T-cell (primary cell): ENCODE measurements at regions of chr14 and their contacts with region 1.

Region 1: DNA sequence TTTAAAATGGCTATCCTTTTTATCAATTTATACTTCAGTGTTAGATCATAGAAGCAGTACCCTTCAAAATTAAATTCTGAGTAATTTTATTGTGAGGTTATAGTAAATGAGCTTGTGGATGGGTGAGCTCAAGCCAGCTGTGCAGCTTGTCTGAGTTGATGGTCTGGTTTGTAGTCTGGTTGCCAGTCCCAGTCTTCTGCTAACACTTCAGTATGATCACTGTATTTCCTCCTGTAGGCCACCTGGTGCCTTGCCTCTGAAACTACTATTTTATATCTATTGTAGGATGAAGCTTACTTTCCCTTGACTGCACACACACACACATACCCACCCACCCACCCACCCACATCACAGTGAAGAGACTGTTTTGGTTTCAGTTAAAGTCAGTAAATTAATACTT is 496.4 kb downstream of the PCNX1 start:
- DNase-seq: peak in 22 of 35 experiments; percentile 5 to 53 (median 19)
- ATAC-seq: peak in 3 of 4 experiments; percentile 47 to 70 (median 59)
- H3K4me3 ChIP-seq: no peak overlapping the region
- H3K4me3 Mint-ChIP-seq: no peak overlapping the region
- H3K27ac ChIP-seq: no peak overlapping the region
- H3K27ac Mint-ChIP-seq: no peak overlapping the region
- H3K4me1 ChIP-seq: peaks cover 14 to 18% of the 10 kb centered on the region in 2 experiments
- H3K4me1 Mint-ChIP-seq: peaks cover 33 to 48% (median 36%) of the 10 kb centered on the region in 3 donors
- H3K27me3 ChIP-seq: no peaks in the 10 kb centered on the region
- H3K27me3 Mint-ChIP-seq: no peaks in the 10 kb centered on the region

Region 2: GRCh38 chr14:71300566-71301330 is 102.9 kb before region 1 on chr14:
- CTCF ChIA-PET with region 1: no interaction called
- POLR2A ChIA-PET with region 1: no interaction called
- DNase-seq: no peak
- ATAC-seq: no peak
- H3K4me3 ChIP-seq: no peak overlapping the region
- H3K4me3 Mint-ChIP-seq: no peak overlapping the region
- H3K27ac ChIP-seq: no peak overlapping the region
- H3K27ac Mint-ChIP-seq: no peak overlapping the region
- H3K4me1 ChIP-seq: no peaks in the 10 kb centered on the region
- H3K4me1 Mint-ChIP-seq: peaks cover 0 to 3% (median 0%) of the 10 kb centered on the region in 3 donors
- H3K27me3 ChIP-seq: no peaks in the 10 kb centered on the region
- H3K27me3 Mint-ChIP-seq: peaks cover 0 to 7% of the 10 kb centered on the region in 2 donors

Region 3: GRCh38 chr14:71320734-71321573 is 82.7 kb before region 1 on chr14:
- CTCF ChIA-PET with region 1: interaction called, 7 to 12 read pairs
- POLR2A ChIA-PET with region 1: interaction called, 3 to 8 read pairs
- DNase-seq: peak; percentile 7 to 79 (median 51)
- ATAC-seq: peak; percentile 25 to 56 (median 52)
- H3K4me3 ChIP-seq: peak overlapping the region; percentile 85 to 87
- H3K4me3 Mint-ChIP-seq: peak overlapping the region; percentile 89 to 93 (median 91)
- H3K27ac ChIP-seq: peak overlapping the region; percentile 95
- H3K27ac Mint-ChIP-seq: peak overlapping the region; percentile 89 to 96
- H3K4me1 ChIP-seq: peaks cover 21 to 32% of the 10 kb centered on the region in 2 experiments
- H3K4me1 Mint-ChIP-seq: peaks cover 50 to 55% (median 54%) of the 10 kb centered on the region in 3 donors
- H3K27me3 ChIP-seq: no peaks in the 10 kb centered on the region
- H3K27me3 Mint-ChIP-seq: no peaks in the 10 kb centered on the region

Region 4: DNA sequence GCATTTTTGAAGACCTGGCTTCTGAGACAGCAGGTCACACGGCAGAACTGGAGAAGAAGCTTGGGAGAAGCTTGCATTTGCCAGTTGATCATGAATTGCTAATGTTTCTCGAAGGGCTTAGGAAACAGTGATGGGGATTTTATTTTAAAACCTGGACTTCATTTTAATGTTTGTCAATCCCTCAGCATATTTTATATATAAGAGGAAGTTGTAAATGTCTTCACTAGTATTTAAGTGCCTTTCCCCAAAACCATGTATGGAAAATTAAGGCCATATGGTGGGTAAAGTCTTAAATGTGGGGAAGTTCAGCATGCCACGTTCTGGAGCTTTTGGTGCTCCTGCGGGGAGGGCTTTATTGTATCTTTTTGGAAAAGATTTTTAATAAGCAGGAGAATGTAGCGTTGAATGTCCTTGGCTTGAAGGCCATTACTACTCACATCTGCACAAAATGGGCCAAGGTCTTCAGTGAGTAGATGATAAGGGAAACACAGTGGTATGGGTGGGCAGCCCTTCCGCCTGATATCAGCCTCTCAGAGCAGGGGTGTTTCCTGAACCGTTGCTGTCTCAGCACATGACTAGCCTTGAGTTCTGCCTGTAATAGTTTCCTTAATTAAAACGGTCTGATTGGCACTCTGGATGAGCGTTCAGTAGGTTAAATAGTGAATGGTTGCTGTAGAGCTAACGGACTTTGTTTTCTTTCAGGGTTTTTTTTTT is 15.0 kb after region 1 on chr14:
- CTCF ChIA-PET with region 1: no interaction called
- POLR2A ChIA-PET with region 1: interaction called, 3 to 11 read pairs
- DNase-seq: no peak
- ATAC-seq: no peak
- H3K4me3 ChIP-seq: no peak overlapping the region
- H3K4me3 Mint-ChIP-seq: no peak overlapping the region
- H3K27ac ChIP-seq: no peak overlapping the region
- H3K27ac Mint-ChIP-seq: no peak overlapping the region
- H3K4me1 ChIP-seq: no peaks in the 10 kb centered on the region
- H3K4me1 Mint-ChIP-seq: peaks cover 0 to 5% (median 2%) of the 10 kb centered on the region in 3 donors
- H3K27me3 ChIP-seq: no peaks in the 10 kb centered on the region
- H3K27me3 Mint-ChIP-seq: no peaks in the 10 kb centered on the region

Region 5: GRCh38 chr14:72714094-72714493 is 1310.4 kb after region 1 on chr14:
- CTCF ChIA-PET with region 1: no interaction called
- POLR2A ChIA-PET with region 1: no interaction called
- DNase-seq: peak in 32 of 35 experiments; percentile 7 to 66 (median 44)
- ATAC-seq: peak; percentile 56 to 95 (median 66)
- H3K4me3 ChIP-seq: peak overlapping the region in 1 of 2 donors; percentile 11
- H3K4me3 Mint-ChIP-seq: peak overlapping the region; percentile 4 to 68 (median 7)
- H3K27ac ChIP-seq: no peak overlapping the region
- H3K27ac Mint-ChIP-seq: no peak overlapping the region
- H3K4me1 ChIP-seq: peaks cover 26 to 30% of the 10 kb centered on the region in 2 experiments
- H3K4me1 Mint-ChIP-seq: peaks cover 42 to 48% (median 44%) of the 10 kb centered on the region in 3 donors
- H3K27me3 ChIP-seq: peaks cover 0 to 5% of the 10 kb centered on the region in 2 experiments
- H3K27me3 Mint-ChIP-seq: no peaks in the 10 kb centered on the region